ENCODE measurements at regions of chr1 and their contacts with region 1.

Region 1: GRCh38 chr1:8873506-8874229 is 4.8 kb downstream of the ENO1 start:
- DNase-seq: peak in 4 of 5 donors; percentile 25 to 81 (median 55)
- H3K4me3 ChIP-seq: peak overlapping the region; percentile 8
- H3K4me3 Mint-ChIP-seq: peak overlapping the region; percentile 23 to 70 (median 50)
- H3K27ac ChIP-seq: peak overlapping the region; percentile 89
- H3K27ac Mint-ChIP-seq: peak overlapping the region; percentile 32 to 96 (median 81)
- H3K4me1 ChIP-seq: peaks cover 62% of the 10 kb centered on the region
- H3K4me1 Mint-ChIP-seq: peaks cover 52 to 80% (median 65%) of the 10 kb centered on the region in 3 donors
- H3K27me3 ChIP-seq: no peaks in the 10 kb centered on the region
- H3K27me3 Mint-ChIP-seq: peaks cover 0 to 2% of the 10 kb centered on the region in 2 donors

Region 2: DNA sequence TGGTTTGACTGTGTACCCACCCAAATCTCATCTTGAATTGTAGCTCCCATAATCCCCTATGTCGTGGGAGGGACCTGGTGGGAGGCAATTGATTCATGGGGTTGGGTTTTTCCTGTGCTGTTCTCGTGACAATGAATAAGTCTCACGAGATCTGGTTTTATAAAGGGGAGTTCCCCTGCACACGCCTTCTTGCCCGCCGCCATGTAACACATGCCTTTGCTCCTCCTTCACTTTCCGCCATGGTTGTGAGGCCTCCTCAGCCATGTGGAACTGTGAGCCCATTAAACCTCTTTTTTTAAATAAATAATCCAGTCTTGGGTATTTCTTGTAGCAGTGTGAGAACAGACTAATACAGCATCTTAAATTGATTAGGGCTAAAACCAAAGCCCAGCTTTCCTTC is 33.7 kb before region 1 on chr1:
- CTCF ChIA-PET with region 1: no interaction called
- POLR2A ChIA-PET with region 1: no interaction called
- DNase-seq: no peak
- H3K4me3 ChIP-seq: no peak overlapping the region
- H3K4me3 Mint-ChIP-seq: no peak overlapping the region
- H3K27ac ChIP-seq: no peak overlapping the region
- H3K27ac Mint-ChIP-seq: no peak overlapping the region
- H3K4me1 ChIP-seq: no peaks in the 10 kb centered on the region
- H3K4me1 Mint-ChIP-seq: no peaks in the 10 kb centered on the region
- H3K27me3 ChIP-seq: no peaks in the 10 kb centered on the region
- H3K27me3 Mint-ChIP-seq: no peaks in the 10 kb centered on the region

Region 3: GRCh38 chr1:8858888-8859706 is 14.6 kb before region 1 on chr1:
- CTCF ChIA-PET with region 1: interaction called, 80 read pairs
- POLR2A ChIA-PET with region 1: interaction called, 10 read pairs
- DNase-seq: peak in 4 of 5 donors; percentile 20 to 62 (median 48)
- H3K4me3 ChIP-seq: no peak overlapping the region
- H3K4me3 Mint-ChIP-seq: peak overlapping the region in 1 of 7 donors; percentile 18
- H3K27ac ChIP-seq: no peak overlapping the region
- H3K27ac Mint-ChIP-seq: peak overlapping the region in 7 of 8 donors; percentile 13 to 94 (median 77)
- H3K4me1 ChIP-seq: no peaks in the 10 kb centered on the region
- H3K4me1 Mint-ChIP-seq: peaks cover 10 to 25% (median 17%) of the 10 kb centered on the region in 3 donors
- H3K27me3 ChIP-seq: no peaks in the 10 kb centered on the region
- H3K27me3 Mint-ChIP-seq: peaks cover 0 to 2% of the 10 kb centered on the region in 2 donors

Region 4: GRCh38 chr1:9018333-9018732 is 144.7 kb after region 1 on chr1:
- CTCF ChIA-PET with region 1: no interaction called
- POLR2A ChIA-PET with region 1: no interaction called
- DNase-seq: no peak
- H3K4me3 ChIP-seq: no peak overlapping the region
- H3K4me3 Mint-ChIP-seq: no peak overlapping the region
- H3K27ac ChIP-seq: no peak overlapping the region
- H3K27ac Mint-ChIP-seq: no peak overlapping the region
- H3K4me1 ChIP-seq: no peaks in the 10 kb centered on the region
- H3K4me1 Mint-ChIP-seq: peaks cover 0 to 2% (median 0%) of the 10 kb centered on the region in 3 donors
- H3K27me3 ChIP-seq: peaks cover 5% of the 10 kb centered on the region
- H3K27me3 Mint-ChIP-seq: peaks cover 11 to 15% of the 10 kb centered on the region in 2 donors

Measured in CD8-positive, alpha-beta memory T cell (primary cell).